ENCODE measurements at regions of chr16 and their contacts with region 1.

Region 1: GRCh38 chr16:72124761-72125634 is 31.4 kb downstream of the DHX38 start:
- DNase-seq: peak; percentile 68 to 92
- H3K4me3 ChIP-seq: no peak overlapping the region
- H3K27ac ChIP-seq: peak overlapping the region in 1 of 5 donors; percentile 15
- H3K4me1 ChIP-seq: peaks cover 0 to 20% (median 9%) of the 10 kb centered on the region in 4 donors
- H3K27me3 ChIP-seq: no peaks in the 10 kb centered on the region
- CTCF ChIP-seq: peak in 5 of 7 experiments; percentile 42 to 67 (median 54)
- EP300 ChIP-seq: no peak
- POLR2A ChIP-seq: no peak

Region 2: DNA sequence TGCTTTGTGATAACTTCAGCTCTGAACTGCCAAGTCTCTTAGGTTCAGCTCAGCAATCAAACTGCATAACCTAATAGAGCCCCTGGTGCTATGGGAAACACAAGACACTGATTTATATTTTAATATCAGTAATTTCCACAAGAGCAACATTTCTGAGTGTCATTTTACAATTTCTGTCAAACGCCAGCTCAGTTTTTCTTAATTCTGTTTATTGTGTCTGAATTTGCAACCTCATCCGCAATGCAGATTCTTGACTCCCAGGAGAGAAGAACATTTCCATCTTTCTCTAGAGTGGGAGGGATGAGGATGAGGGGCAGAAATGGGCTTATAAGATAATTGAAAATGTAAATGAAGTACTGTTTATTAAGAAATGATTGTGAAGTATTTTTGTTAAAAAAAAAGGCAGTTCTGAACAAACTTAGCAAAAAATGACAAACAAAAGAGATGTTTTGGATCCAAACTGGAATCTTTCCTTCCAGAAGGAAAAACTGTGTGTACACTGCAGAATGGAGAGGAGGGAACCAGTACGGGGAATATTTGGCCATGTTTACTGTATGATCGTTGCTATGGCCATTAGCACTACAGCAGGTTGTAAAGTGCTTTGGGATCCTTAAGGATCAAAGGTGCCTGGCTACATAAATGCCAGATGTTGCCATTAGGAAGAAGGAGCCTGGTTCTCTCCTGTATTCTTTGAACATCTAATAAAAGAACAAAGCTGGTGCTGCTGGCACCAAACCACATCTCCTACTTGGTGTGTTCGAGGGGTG is 54.4 kb after region 1 on chr16:
- intact Hi-C with region 1: no loop called
- DNase-seq: no peak
- H3K4me3 ChIP-seq: no peak overlapping the region
- H3K27ac ChIP-seq: no peak overlapping the region
- H3K4me1 ChIP-seq: no peaks in the 10 kb centered on the region
- H3K27me3 ChIP-seq: no peaks in the 10 kb centered on the region
- CTCF ChIP-seq: no peak
- EP300 ChIP-seq: no peak
- POLR2A ChIP-seq: no peak

Region 3: DNA sequence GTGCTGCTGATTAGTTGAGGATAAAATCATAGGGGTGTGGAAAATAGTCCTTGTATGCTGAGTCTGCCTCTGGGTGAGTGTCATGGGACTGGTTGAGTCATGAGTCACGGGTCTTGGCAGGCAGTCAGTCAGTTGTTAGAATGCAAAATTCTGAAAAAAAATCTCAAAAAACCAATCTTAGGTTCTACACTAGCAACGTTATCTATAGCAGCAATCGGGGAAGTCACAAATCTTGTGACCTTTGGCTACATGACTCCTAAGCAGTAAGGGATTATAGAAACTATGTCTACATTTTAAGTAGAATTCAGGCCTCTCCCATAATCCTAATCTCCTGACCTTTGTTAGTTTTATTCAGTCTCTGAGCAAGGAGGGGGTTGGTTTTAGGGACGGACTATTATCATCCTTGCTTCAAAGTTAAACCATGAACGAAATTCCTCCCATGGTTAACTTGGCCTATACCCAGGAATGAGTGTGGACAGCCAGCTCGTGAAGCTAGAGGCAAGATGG is 64.9 kb after region 1 on chr16:
- intact Hi-C with region 1: no loop called
- DNase-seq: no peak
- H3K4me3 ChIP-seq: no peak overlapping the region
- H3K27ac ChIP-seq: no peak overlapping the region
- H3K4me1 ChIP-seq: no peaks in the 10 kb centered on the region
- H3K27me3 ChIP-seq: no peaks in the 10 kb centered on the region
- CTCF ChIP-seq: no peak
- EP300 ChIP-seq: no peak
- POLR2A ChIP-seq: no peak

Region 4: DNA sequence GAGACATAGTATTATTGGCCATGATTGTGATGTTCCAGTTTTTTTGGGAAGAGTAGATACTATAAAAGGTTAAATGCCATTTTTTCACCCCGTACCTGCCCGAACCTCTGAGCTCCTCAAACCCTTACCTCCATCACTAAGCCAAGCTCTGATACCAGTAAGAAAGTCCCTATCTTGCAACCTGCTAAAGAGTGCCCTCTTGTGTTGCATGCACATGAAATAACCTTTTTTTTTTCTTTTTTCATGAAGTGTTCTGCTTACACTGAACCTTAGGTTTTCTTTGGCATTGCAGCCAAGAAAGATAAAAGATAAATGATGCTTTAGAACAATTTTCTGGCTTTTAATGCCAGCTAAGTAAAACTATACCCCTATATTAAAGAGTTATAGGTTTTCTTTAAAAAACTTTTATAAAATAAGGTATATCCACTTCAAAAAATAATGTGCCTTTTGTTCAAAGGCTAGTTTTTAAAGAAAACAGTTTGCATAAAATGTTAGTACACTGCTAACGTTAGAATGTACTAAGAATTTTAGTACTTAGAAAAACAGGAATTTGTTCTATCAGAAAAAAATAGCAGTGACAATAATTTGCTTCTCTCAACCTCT is 342.3 kb after region 1 on chr16:
- intact Hi-C with region 1: loop called (anchors 10 kb)
- DNase-seq: peak in 1 of 2 donors; percentile 71
- H3K4me3 ChIP-seq: no peak overlapping the region
- H3K27ac ChIP-seq: no peak overlapping the region
- H3K4me1 ChIP-seq: no peaks in the 10 kb centered on the region
- H3K27me3 ChIP-seq: no peaks in the 10 kb centered on the region
- CTCF ChIP-seq: peak in 4 of 7 experiments; percentile 21 to 34 (median 28)
- EP300 ChIP-seq: no peak
- POLR2A ChIP-seq: no peak